ENCODE measurements at regions of chr11 and their contacts with region 1.

Region 1: GRCh38 chr11:6251120-6251733 is 8.4 kb upstream of the CCKBR start:
- DNase-seq: peak; percentile 64
- CTCF ChIP-seq: peak; percentile 68

Region 2: DNA sequence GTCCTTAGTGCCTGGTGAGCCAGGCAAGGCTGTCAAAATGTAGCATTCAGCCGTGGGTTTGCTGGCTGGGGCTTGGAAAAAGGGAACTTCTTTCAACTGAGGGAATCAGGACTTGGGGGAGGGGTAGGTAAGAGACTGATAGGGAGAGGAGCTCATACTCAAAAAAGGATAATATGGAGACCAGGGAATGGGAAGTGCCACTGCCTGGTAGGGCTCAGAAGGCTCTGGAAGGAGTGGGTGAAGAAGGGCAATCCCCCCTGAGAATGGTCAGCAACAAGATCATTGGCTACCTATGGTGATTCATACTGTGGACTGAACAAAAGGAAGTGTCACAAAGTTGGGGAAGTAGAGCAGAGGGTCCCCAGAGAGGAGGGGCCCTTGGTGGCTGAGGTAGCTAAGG is 10.4 kb before region 1 on chr11:
- CTCF ChIA-PET with region 1: interaction called, 45 read pairs
- POLR2A ChIA-PET with region 1: no interaction called
- DNase-seq: no peak
- CTCF ChIP-seq: no peak

Region 3: GRCh38 chr11:6285019-6285418 is 33.8 kb after region 1 on chr11:
- CTCF ChIA-PET with region 1: interaction called, 10 read pairs
- POLR2A ChIA-PET with region 1: no interaction called
- DNase-seq: no peak
- CTCF ChIP-seq: no peak

Region 4: DNA sequence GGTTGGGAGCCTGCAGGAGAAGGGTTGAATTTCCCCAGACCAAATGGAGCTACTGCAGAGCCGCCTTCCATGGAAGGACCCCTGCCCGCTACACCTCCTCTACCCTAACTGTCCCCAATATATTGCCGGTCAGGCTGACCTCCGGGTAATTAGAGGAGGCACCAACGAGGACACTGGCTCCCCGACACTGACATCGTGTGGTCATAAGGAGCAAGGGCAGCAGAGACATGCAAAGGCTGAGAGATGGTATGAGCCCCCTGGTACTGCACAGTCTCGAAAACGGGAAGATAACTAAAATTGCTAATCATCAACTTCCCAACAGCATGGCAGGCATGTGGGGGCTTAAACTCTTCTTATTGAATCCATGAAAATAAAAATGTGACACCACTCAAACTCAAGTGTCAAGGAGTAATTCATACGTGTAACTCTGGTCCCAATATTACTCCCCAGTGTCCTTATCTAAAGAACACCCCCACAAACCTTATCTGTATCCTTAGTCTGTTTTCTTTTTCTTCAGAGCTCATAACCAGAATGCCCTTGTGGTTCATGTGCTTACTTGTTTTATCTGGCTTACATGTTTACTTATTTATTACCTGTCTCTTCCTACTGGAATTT is 64.7 kb after region 1 on chr11:
- CTCF ChIA-PET with region 1: interaction called, 10 read pairs
- POLR2A ChIA-PET with region 1: no interaction called
- DNase-seq: peak; percentile 68
- CTCF ChIP-seq: peak; percentile 75

Region 5: GRCh38 chr11:6362873-6363678 is 111.8 kb after region 1 on chr11:
- CTCF ChIA-PET with region 1: interaction called, 66 read pairs
- POLR2A ChIA-PET with region 1: no interaction called
- DNase-seq: peak; percentile 78
- CTCF ChIP-seq: peak; percentile 86